ENCODE measurements at regions of chr11 and their contacts with region 1.

Region 1: DNA sequence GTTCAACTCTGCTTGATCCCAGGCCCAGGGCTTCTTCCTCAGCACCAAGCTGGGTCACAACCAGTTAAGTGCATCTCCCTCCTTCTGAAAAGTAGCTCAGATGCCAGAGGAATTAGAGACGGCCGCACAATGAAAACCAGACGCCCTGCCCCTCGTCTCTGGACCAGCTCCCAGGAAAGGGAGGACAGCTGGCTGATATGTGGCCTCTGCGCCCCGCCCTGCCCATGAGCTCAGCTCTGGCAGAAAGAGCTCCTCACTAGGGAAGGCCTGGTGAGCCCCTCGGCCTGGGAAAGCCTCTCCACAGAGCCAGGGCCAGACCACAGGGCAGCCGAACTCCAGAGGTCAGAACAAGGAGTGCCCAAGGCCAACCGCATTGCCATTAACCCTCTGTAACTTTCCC is 18.1 kb upstream of the SCGB1A1 start:
- DNase-seq: peak; percentile 73
- H3K4me3 ChIP-seq: no peak overlapping the region
- H3K27ac ChIP-seq: peak overlapping the region; percentile 79 to 91 (median 84)
- H3K4me1 ChIP-seq: peaks cover 50 to 67% (median 50%) of the 10 kb centered on the region in 4 donors
- H3K27me3 ChIP-seq: no peaks in the 10 kb centered on the region
- CTCF ChIP-seq: no peak
- EP300 ChIP-seq: no peak
- POLR2A ChIP-seq: no peak

Region 2: DNA sequence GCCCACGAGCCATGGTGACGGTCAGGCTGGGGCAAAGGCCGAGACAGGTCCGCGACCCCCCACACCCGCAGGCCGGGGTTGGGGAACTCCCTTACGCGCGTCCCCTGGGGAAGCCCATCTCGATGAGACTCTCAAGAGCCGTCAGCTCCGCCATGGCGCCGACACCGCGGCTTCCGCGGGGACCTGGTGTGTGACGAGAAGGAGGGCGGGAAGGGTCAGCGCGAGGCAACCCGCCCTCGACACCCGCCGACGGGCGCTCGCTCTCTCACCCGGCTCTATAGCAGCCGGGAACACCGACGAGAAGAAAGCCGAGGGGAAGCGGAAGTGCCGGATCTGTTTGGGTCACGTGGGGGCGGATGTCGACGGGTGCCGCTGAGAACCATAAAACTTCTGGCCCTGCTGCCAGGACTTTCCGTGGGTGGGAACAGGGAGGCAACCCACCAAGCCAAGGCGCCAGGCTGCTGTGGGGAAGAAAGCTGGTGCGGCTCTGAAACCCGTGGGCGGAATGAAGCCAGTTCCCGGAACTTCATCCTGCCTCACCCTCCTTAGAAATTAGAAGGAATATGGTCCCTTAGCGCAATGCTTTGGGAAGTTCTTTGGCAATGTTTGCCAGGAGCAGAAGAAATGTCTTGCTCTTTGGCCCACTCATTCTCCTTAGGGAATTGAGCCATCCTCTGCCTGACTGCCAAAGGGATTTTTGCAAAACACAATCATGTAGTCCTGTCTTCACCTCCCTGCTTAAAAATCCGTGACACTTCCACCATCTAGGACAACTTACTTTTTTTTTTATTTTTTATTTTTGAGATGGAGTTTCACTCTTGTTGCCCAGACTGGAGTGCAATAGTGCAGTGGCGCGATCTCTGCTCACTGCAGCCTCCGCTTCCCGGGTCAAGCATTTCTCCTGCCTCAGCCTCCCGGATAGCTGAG is 278.3 kb after region 1 on chr11 and contains the start of gene UBXN1:
- in situ Hi-C with region 1: loop called in 2 of 4 experiments (anchors 25 kb)
- intact Hi-C with region 1: loop called (anchors 10 kb)
- DNase-seq: peak; percentile 92
- H3K4me3 ChIP-seq: peak within 1 kb of the TSS; percentile 81 to 88 (median 86)
- H3K27ac ChIP-seq: peak within 1 kb of the TSS; percentile 89 to 95 (median 94)
- H3K4me1 ChIP-seq: peaks cover 14 to 28% (median 16%) of the 10 kb centered on the region in 4 donors
- H3K27me3 ChIP-seq: no peaks in the 10 kb centered on the region
- CTCF ChIP-seq: no peak
- EP300 ChIP-seq: no peak
- POLR2A ChIP-seq: peak; percentile 81
- total RNA-seq, gene UBXN1: 129 to 219 (median 142) TPM